ENCODE measurements at regions of chrX and their contacts with region 1.

Region 1: GRCh38 chrX:140664939-140665338 is 44.6 kb upstream of the LINC00632 start:
- DNase-seq: peak; percentile 13
- H3K4me3 ChIP-seq: no peak overlapping the region
- H3K27ac ChIP-seq: no peak overlapping the region
- H3K4me1 ChIP-seq: no peaks in the 10 kb centered on the region
- H3K27me3 ChIP-seq: no peaks in the 10 kb centered on the region
- CTCF ChIP-seq: peak; percentile 26 to 44

Region 2: DNA sequence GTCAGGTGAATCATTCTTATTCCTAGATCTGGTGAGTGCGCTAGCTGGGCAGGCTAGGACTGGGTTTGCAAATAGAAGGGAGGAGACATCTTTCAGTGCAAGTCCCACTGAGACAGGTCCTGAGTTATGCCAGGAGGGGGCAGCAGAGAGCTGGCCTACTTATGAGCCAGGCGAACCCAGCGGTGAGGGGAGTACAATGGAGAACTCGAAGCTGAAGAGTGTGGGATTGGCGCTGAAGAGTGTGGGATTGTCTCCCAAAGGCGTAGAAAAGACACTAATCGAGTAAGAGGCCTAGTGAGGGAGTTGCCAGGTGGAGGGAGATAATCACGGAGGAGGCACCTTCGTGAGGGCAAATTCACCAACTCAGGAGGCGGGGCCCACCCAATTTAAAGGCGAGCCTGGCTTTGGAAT is 607.9 kb before region 1 on chrX:
- CTCF ChIA-PET with region 1: no interaction called
- dilution Hi-C with region 1: no loop called
- in situ Hi-C with region 1: loop called in 1 of 2 experiments (anchors 25 kb)
- intact Hi-C with region 1: loop called (anchors 1 kb)
- DNase-seq: peak; percentile 57
- H3K4me3 ChIP-seq: no peak overlapping the region
- H3K27ac ChIP-seq: no peak overlapping the region
- H3K4me1 ChIP-seq: no peaks in the 10 kb centered on the region
- H3K27me3 ChIP-seq: no peaks in the 10 kb centered on the region
- CTCF ChIP-seq: peak; percentile 74 to 91